H1 (cell line): ENCODE measurements at regions of chr1 and their contacts with region 1.

Region 1: GRCh38 chr1:178031856-178032320 is 62.0 kb upstream of the RASAL2 start:
- DNase-seq: peak; percentile 34 to 86
- H3K4me3 ChIP-seq: no peak overlapping the region
- H3K27ac ChIP-seq: no peak overlapping the region
- H3K4me1 ChIP-seq: no peaks in the 10 kb centered on the region
- H3K27me3 ChIP-seq: no peaks in the 10 kb centered on the region; a peak in 1 of 7 replicates
- CTCF ChIP-seq: peak; percentile 84 to 95 (median 93)
- EP300 ChIP-seq: no peak
- POLR2A ChIP-seq: no peak
- RAD21 ChIP-seq: peak; percentile 79 to 86

Region 2: DNA sequence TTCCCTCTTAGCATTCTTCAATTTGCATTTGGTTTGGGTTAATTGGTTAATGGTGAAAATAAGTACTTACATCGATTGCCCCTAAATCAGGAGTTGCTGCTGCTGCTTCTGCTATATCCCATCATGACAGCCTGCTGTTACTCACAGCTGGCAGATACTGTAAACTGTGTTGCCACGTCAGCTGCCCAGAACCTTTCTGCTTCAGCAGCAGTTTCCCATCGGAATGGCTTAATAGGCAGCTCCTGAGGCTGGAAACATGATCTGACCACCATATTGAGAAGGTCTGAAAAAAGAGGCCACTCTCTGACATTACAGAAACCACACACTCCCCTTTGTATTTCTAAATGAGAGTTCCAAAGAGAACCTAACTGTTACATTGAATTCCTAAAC is 47.8 kb before region 1 on chr1:
- CTCF ChIA-PET with region 1: no interaction called
- POLR2A ChIA-PET with region 1: no interaction called
- DNase-seq: peak; percentile 21 to 56
- H3K4me3 ChIP-seq: no peak overlapping the region
- H3K27ac ChIP-seq: no peak overlapping the region
- H3K4me1 ChIP-seq: peaks cover 0 to 2% (median 0%) of the 10 kb centered on the region in 4 experiments; a peak in 1 of 7 replicates
- H3K27me3 ChIP-seq: no peaks in the 10 kb centered on the region
- CTCF ChIP-seq: no peak
- EP300 ChIP-seq: no peak
- POLR2A ChIP-seq: no peak
- RAD21 ChIP-seq: no peak

Region 3: GRCh38 chr1:177996957-177997356 is 34.9 kb before region 1 on chr1:
- CTCF ChIA-PET with region 1: interaction called, 23 read pairs
- POLR2A ChIA-PET with region 1: no interaction called
- DNase-seq: no peak
- H3K4me3 ChIP-seq: no peak overlapping the region
- H3K27ac ChIP-seq: no peak overlapping the region
- H3K4me1 ChIP-seq: peaks cover 0 to 7% (median 1%) of the 10 kb centered on the region in 4 experiments; a peak in 3 of 7 replicates
- H3K27me3 ChIP-seq: no peaks in the 10 kb centered on the region
- CTCF ChIP-seq: no peak
- EP300 ChIP-seq: no peak
- POLR2A ChIP-seq: no peak
- RAD21 ChIP-seq: no peak

Region 4: DNA sequence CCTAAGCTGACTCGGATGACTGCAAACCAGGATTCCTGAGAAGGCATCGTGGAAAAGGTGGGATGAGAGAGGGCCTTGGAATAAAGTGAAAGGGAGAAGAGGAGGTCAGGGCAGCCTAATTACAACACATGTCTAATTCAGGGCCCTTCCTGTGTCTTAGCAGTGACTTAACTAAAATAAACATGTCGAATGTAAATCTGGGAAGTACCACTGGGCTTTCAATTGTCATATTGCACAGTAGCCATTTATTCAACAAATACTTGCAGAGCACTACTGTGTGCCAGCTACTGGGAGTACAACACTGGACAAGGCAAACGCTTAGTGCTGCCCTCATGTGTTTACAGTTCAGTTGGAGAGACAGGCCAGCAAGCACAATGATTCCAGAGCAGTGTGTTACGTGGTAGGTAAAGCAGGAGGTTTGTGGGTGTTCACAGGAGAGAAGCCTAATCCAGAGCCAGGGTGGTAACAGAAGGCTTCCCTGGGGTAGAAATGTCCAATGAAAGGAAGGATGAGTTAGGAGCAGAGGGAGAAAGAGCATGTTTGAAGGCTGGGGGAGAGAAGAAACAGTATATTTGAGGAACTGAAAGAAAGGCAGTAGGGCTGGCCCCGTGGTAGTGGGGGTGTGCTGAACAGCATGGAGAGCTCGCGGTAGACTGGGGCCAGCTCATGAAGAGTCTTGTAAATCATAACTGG is 24.0 kb after region 1 on chr1:
- CTCF ChIA-PET with region 1: interaction called, 39 read pairs
- POLR2A ChIA-PET with region 1: interaction called, 6 read pairs
- DNase-seq: no peak
- H3K4me3 ChIP-seq: no peak overlapping the region
- H3K27ac ChIP-seq: no peak overlapping the region
- H3K4me1 ChIP-seq: peaks cover 4 to 28% (median 10%) of the 10 kb centered on the region in 4 experiments; a peak in 6 of 7 replicates
- H3K27me3 ChIP-seq: no peaks in the 10 kb centered on the region
- CTCF ChIP-seq: peak in 2 of 3 experiments; percentile 16 to 23; a peak in 2 of 4 replicates
- EP300 ChIP-seq: no peak
- POLR2A ChIP-seq: no peak
- RAD21 ChIP-seq: peak in 1 of 2 experiments; percentile 10; a peak in 1 of 4 replicates

Region 5: DNA sequence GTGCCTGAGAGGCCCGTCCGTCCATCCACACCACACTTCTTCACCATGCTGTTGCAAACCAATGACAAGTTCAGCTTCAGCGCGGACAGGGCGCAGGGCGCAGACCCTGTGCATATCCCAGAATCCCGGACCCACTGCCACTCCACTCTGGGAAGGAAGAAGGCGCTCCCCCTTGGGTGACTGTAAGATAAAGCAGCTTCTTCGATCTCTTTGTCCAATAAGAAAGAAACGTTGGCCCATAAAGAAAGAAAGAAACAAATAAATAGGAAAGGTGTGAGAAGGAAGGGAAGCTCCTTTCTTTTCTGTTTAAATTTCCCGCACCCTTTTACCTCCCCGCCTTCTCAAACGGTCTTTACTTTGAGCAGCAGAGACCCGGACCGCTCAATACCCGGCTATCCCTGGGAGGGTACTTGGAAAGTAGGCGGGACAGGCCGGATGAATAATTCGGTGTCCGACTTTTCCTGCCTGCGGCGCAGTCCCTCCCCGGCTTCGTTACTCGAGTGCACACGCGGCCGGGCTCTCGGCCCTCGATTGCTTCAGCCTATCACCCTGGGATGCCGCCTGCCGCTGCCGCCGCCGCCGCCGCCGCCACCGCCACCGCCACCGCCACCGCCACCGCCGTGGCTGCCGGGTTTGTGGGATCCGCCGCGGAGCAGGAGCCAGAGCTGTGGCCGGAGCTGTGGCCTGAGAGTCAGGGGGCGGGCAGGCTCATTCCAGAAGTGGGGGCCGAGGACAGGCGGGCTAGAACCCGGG is 61.5 kb after region 1 on chr1:
- CTCF ChIA-PET with region 1: interaction called, 20 read pairs
- POLR2A ChIA-PET with region 1: interaction called, 14 read pairs
- DNase-seq: peak; percentile 86 to 87
- H3K4me3 ChIP-seq: peak overlapping the region; percentile 82 to 100 (median 92)
- H3K27ac ChIP-seq: peak overlapping the region; percentile 54; the same call in 1 of the 2 replicates
- H3K4me1 ChIP-seq: peaks cover 0 to 9% (median 8%) of the 10 kb centered on the region in 4 experiments; a peak in 5 of 7 replicates
- H3K27me3 ChIP-seq: no peaks in the 10 kb centered on the region
- CTCF ChIP-seq: peak in 1 of 3 experiments; percentile 4; a peak in 1 of 4 replicates
- EP300 ChIP-seq: peak in 1 of 2 experiments; percentile 60; a peak in 1 of 3 replicates
- POLR2A ChIP-seq: peak in 1 of 2 experiments; percentile 69; a peak in 1 of 3 replicates
- RAD21 ChIP-seq: no peak; a peak in 1 of 4 replicates

Region 6: GRCh38 chr1:178189814-178190213 is 157.9 kb after region 1 on chr1:
- CTCF ChIA-PET with region 1: interaction called, 36 read pairs
- POLR2A ChIA-PET with region 1: no interaction called
- DNase-seq: peak in 1 of 2 experiments; percentile 29
- H3K4me3 ChIP-seq: no peak overlapping the region
- H3K27ac ChIP-seq: no peak overlapping the region
- H3K4me1 ChIP-seq: no peaks in the 10 kb centered on the region
- H3K27me3 ChIP-seq: no peaks in the 10 kb centered on the region
- CTCF ChIP-seq: peak; percentile 81 to 96 (median 85)
- EP300 ChIP-seq: no peak
- POLR2A ChIP-seq: no peak
- RAD21 ChIP-seq: peak; percentile 90 to 92